Activated CD4-positive, alpha-beta T cell treated with anti-CD3 and anti-CD28 coated beads, Interleukin-2, amount 10 ng/mL, durations not matched to agents 24 days and 14 days (primary cell): ENCODE measurements at regions of chr19 and their contacts with region 1.

Region 1: GRCh38 chr19:55407800-55408532 is 378 bp upstream of the UBE2S start:
- DNase-seq: peak; percentile 99
- H3K4me3 Mint-ChIP-seq: peak overlapping the region; percentile 89
- H3K27ac Mint-ChIP-seq: peak overlapping the region; percentile 98
- H3K4me1 Mint-ChIP-seq: peaks cover 34% of the 10 kb centered on the region
- H3K27me3 Mint-ChIP-seq: peaks cover 7% of the 10 kb centered on the region

Region 2: GRCh38 chr19:55044673-55045443 is 363.1 kb before region 1 on chr19:
- intact Hi-C with region 1: no loop called
- DNase-seq: no peak
- H3K4me3 Mint-ChIP-seq: no peak overlapping the region
- H3K27ac Mint-ChIP-seq: no peak overlapping the region
- H3K4me1 Mint-ChIP-seq: peaks cover 19% of the 10 kb centered on the region
- H3K27me3 Mint-ChIP-seq: no peaks in the 10 kb centered on the region

Region 3: DNA sequence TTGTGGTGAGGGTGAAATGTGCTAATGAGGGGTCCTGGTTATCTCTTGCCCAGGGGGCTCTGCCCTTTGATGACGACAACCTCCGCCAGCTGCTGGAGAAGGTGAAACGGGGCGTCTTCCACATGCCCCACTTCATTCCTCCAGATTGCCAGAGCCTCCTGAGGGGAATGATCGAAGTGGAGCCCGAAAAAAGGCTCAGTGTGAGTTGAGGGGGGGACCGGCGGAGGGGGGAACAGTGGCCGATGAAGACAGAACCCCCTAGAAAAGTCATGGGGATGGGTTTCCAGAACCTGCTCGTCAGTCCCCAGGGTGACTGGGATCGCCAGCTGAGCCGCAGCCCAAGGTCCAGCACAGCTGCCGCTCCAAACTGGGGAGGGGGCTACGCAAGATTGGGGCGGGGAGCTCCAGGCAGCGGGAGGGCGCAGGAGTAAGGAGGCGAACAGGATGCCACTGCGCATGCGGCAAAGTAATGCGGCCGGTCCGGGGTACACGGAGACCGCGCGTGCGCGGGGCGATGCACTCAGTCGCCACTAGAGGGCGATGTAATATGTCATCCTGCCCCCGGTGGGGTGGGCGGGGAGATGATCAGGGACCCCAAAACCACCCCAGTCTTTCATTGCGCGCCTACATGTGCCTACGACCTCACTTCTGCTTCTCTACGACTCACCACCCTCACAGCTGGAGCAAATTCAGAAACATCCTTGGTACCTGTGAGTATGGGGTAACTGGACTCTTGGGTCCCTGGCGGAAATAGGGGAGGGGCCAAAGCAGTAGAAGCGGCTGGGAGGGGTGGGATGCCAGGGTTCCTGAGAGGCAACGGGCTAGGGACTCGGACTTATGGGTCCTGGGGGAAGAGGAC is 106.3 kb before region 1 on chr19:
- intact Hi-C with region 1: loop called (anchors 5 kb)
- DNase-seq: peak; percentile 99
- H3K4me3 Mint-ChIP-seq: peak overlapping the region; percentile 95
- H3K27ac Mint-ChIP-seq: peak overlapping the region; percentile 95
- H3K4me1 Mint-ChIP-seq: peaks cover 16% of the 10 kb centered on the region
- H3K27me3 Mint-ChIP-seq: no peaks in the 10 kb centered on the region